CD8-positive, alpha-beta T cell (primary cell): ENCODE measurements at regions of chr4 and their contacts with region 1.

Region 1: DNA sequence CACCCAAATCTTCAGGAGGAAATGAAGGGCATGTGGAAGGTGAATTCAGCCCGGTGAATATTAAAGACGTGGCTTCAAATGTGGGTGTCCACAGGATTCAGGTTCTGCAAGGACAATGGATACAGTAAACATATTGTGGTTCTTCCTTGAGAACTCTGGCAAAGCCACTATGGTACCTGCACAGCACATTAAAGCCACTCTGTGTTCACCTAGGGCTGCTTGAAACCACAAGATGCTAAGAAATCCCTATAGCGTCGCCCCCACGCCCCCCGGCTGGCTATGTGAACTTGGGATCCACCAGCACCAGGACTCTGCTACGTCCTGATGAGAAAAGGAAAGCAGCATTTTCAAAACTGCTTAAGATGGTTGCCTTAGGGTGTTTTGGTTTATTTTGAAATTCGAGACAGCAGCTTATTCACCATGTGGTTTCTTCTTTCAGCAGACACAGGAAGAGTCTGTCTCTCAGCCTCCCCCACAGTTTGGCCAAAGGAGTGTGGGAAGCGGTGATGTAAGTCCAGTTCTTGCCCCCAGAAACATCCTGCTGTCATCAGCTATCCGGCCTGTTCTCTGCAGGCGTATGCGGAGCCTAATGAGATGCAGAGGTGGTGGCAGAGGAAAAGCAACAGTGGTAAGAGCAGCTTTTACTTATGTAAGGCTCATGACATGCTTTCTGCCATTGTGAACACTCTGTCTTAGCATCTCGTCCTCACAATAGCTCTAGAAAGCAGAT is 111.5 kb downstream of the AFAP1 start:
- DNase-seq: peak; percentile 29 to 89 (median 59)
- ATAC-seq: peak; percentile 82
- H3K4me3 ChIP-seq: peak overlapping the region in 1 of 2 experiments; percentile 12
- H3K4me3 Mint-ChIP-seq: peak overlapping the region; percentile 56
- H3K27ac ChIP-seq: peak overlapping the region; percentile 21 to 69
- H3K27ac Mint-ChIP-seq: peak overlapping the region; percentile 94
- H3K4me1 ChIP-seq: peaks cover 31% of the 10 kb centered on the region
- H3K4me1 Mint-ChIP-seq: peaks cover 47% of the 10 kb centered on the region
- H3K27me3 ChIP-seq: no peaks in the 10 kb centered on the region
- H3K27me3 Mint-ChIP-seq: no peaks in the 10 kb centered on the region
- CTCF ChIP-seq: no peak

Region 2: GRCh38 chr4:7472442-7473013 is 355.6 kb before region 1 on chr4:
- CTCF ChIA-PET with region 1: no interaction called
- POLR2A ChIA-PET with region 1: no interaction called
- intact Hi-C with region 1: no loop called
- DNase-seq: no peak
- ATAC-seq: no peak
- H3K4me3 ChIP-seq: no peak overlapping the region
- H3K4me3 Mint-ChIP-seq: no peak overlapping the region
- H3K27ac ChIP-seq: no peak overlapping the region
- H3K27ac Mint-ChIP-seq: no peak overlapping the region
- H3K4me1 ChIP-seq: no peaks in the 10 kb centered on the region
- H3K4me1 Mint-ChIP-seq: no peaks in the 10 kb centered on the region
- H3K27me3 ChIP-seq: peaks cover 0 to 3% of the 10 kb centered on the region in 2 experiments
- H3K27me3 Mint-ChIP-seq: peaks cover 14% of the 10 kb centered on the region
- CTCF ChIP-seq: no peak

Region 3: GRCh38 chr4:7857238-7857701 is 29.1 kb after region 1 on chr4:
- CTCF ChIA-PET with region 1: no interaction called
- POLR2A ChIA-PET with region 1: interaction called, 3 read pairs
- intact Hi-C with region 1: loop called (anchors 1 to 2 kb)
- DNase-seq: no peak
- ATAC-seq: no peak
- H3K4me3 ChIP-seq: no peak overlapping the region
- H3K4me3 Mint-ChIP-seq: no peak overlapping the region
- H3K27ac ChIP-seq: no peak overlapping the region
- H3K27ac Mint-ChIP-seq: no peak overlapping the region
- H3K4me1 ChIP-seq: peaks cover 43% of the 10 kb centered on the region
- H3K4me1 Mint-ChIP-seq: peaks cover 51% of the 10 kb centered on the region
- H3K27me3 ChIP-seq: no peaks in the 10 kb centered on the region
- H3K27me3 Mint-ChIP-seq: no peaks in the 10 kb centered on the region
- CTCF ChIP-seq: no peak

Region 4: DNA sequence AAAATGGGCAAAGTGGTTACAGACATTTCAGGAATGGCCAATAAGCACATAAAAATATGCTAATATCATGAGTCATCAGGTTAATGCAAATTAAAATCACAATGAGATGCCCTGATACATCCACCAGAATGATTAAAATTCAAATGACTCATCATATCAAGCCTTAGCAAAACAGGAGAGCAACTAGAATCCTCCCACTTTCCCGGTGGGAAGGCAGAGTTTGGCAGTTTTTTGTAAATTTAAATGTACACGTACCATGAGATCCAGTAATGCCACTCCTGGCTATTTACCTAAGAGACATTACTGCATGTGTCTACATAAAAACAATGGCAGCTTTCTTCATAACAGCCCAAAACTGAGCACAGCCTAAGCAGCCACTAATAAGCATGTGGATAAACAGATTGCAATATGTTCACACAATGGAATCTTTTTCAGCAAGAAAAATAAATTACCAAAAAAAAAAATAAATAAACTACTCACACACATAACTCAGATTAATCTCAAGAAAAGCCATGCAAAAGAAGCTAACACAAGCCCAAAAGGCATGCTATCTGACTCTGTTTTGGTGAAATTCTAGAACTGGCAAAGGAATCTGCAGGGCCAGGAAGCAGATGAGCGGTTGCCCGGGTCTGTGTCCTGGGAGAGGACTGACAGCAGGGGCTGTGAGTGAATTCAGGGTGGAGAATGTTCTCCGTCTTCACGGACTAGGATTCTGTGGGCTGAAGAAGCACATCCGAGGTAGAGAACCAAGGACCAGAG is 62.7 kb after region 1 on chr4:
- CTCF ChIA-PET with region 1: no interaction called
- POLR2A ChIA-PET with region 1: no interaction called
- intact Hi-C with region 1: no loop called
- DNase-seq: no peak
- ATAC-seq: no peak
- H3K4me3 ChIP-seq: no peak overlapping the region
- H3K4me3 Mint-ChIP-seq: no peak overlapping the region
- H3K27ac ChIP-seq: no peak overlapping the region
- H3K27ac Mint-ChIP-seq: no peak overlapping the region
- H3K4me1 ChIP-seq: no peaks in the 10 kb centered on the region
- H3K4me1 Mint-ChIP-seq: peaks cover 11% of the 10 kb centered on the region
- H3K27me3 ChIP-seq: no peaks in the 10 kb centered on the region
- H3K27me3 Mint-ChIP-seq: no peaks in the 10 kb centered on the region
- CTCF ChIP-seq: no peak

Region 5: DNA sequence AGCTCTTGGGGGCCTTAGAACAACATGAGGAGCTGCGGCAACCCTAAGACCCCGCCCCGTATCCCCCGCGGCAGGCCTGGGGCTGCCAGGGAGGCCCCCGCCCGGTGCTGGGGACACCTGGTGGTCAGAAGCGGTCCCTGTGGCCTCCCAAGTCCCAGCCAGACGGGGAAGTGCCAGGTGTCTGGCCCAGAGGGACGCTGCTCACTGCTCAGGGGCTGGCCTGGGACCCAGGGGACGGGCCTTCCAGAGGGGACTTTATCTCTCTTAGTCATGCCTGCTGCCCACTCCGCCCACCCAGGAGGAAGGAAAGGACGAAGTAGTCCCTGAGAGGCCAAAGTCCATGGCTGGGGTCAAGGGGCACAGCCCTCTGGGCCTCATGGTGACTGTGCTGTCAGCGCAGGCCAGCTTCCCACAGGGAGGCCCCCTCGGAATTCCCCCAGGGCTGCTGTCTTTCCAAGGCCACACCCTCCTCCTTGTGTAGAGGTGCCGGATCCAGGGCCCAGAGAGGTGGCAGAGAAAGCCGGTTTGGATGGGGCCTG is 410.4 kb after region 1 on chr4:
- CTCF ChIA-PET with region 1: no interaction called
- POLR2A ChIA-PET with region 1: no interaction called
- intact Hi-C with region 1: no loop called
- DNase-seq: no peak
- ATAC-seq: no peak
- H3K4me3 ChIP-seq: no peak overlapping the region
- H3K4me3 Mint-ChIP-seq: no peak overlapping the region
- H3K27ac ChIP-seq: no peak overlapping the region
- H3K27ac Mint-ChIP-seq: no peak overlapping the region
- H3K4me1 ChIP-seq: peaks cover 9% of the 10 kb centered on the region
- H3K4me1 Mint-ChIP-seq: peaks cover 12% of the 10 kb centered on the region
- H3K27me3 ChIP-seq: no peaks in the 10 kb centered on the region
- H3K27me3 Mint-ChIP-seq: no peaks in the 10 kb centered on the region
- CTCF ChIP-seq: no peak